CD8-positive, alpha-beta T cell (primary cell): ENCODE measurements at regions of chr5 and their contacts with region 1.

Region 1: GRCh38 chr5:132896685-132897084 is 23.2 kb downstream of the LEAP2 start:
- DNase-seq: no peak
- ATAC-seq: no peak
- H3K4me3 ChIP-seq: no peak overlapping the region
- H3K4me3 Mint-ChIP-seq: no peak overlapping the region
- H3K27ac ChIP-seq: no peak overlapping the region
- H3K27ac Mint-ChIP-seq: no peak overlapping the region
- H3K4me1 ChIP-seq: no peaks in the 10 kb centered on the region
- H3K4me1 Mint-ChIP-seq: no peaks in the 10 kb centered on the region
- H3K27me3 ChIP-seq: no peaks in the 10 kb centered on the region
- H3K27me3 Mint-ChIP-seq: no peaks in the 10 kb centered on the region
- CTCF ChIP-seq: no peak

Region 2: GRCh38 chr5:132907161-132907560 is 10.5 kb after region 1 on chr5:
- CTCF ChIA-PET with region 1: no interaction called
- POLR2A ChIA-PET with region 1: no interaction called
- intact Hi-C with region 1: loop called in 1 of 2 experiments (anchors 1 kb)
- DNase-seq: no peak
- ATAC-seq: no peak
- H3K4me3 ChIP-seq: no peak overlapping the region
- H3K4me3 Mint-ChIP-seq: no peak overlapping the region
- H3K27ac ChIP-seq: no peak overlapping the region
- H3K27ac Mint-ChIP-seq: no peak overlapping the region
- H3K4me1 ChIP-seq: no peaks in the 10 kb centered on the region
- H3K4me1 Mint-ChIP-seq: peaks cover 19% of the 10 kb centered on the region
- H3K27me3 ChIP-seq: no peaks in the 10 kb centered on the region
- H3K27me3 Mint-ChIP-seq: no peaks in the 10 kb centered on the region
- CTCF ChIP-seq: no peak